IMR-90 (cell line): ENCODE measurements at regions of chr11 and their contacts with region 1.

Region 1: DNA sequence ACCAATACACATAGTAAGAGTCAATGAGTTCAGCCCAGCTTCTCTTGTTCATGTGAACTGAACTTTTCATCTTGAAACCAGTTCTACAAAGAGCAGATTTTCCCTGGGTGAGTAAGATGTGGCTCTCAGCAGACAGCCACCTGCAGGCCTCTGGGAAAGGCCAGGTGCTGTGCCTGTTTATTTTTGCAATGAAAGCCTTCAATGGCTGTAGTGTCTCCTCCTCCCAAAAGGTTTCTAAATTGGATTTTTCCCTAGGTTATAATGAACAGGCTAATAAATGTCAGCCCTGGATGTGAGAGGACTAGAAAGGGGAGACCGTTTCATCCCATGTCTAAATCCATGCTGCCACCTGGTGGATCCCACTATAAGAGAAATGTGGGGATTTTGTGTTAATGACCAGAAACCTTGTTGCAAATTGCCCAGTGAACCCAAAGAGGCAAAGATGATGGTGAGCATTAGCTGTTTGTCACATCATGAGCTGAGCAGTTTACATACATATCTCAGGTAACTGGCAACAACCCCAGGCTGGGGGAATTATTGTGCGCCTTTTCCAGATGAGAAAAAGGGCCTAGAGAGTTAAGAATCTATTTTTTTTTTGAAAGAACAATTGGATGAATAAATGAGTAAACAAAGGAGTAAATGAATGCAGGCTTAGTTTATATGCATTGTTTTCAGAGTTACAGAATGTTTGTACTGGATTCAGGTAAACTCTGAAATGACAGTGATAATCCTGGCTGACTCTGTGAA is 12.7 kb downstream of the C11orf91 start:
- DNase-seq: peak; percentile 78
- ATAC-seq: no peak
- H3K4me3 ChIP-seq: no peak overlapping the region
- H3K27ac ChIP-seq: no peak overlapping the region
- H3K4me1 ChIP-seq: peaks cover 28% of the 10 kb centered on the region
- H3K27me3 ChIP-seq: no peaks in the 10 kb centered on the region
- CTCF ChIP-seq: peak; percentile 96
- POLR2A ChIP-seq: peak; percentile 55; the same call in 1 of the 2 replicates
- RAD21 ChIP-seq: peak; percentile 98

Region 2: GRCh38 chr11:33161120-33162005 is 526.5 kb before region 1 on chr11 and contains the start of gene CSTF3:
- CTCF ChIA-PET with region 1: interaction called, 3 read pairs
- POLR2A ChIA-PET with region 1: no interaction called
- dilution Hi-C with region 1: no loop called
- in situ Hi-C with region 1: loop called (anchors 5 kb)
- intact Hi-C with region 1: loop called (anchors 1 kb)
- DNase-seq: peak; percentile 98
- ATAC-seq: peak; percentile 97
- H3K4me3 ChIP-seq: peak within 1 kb of the TSS; percentile 59
- H3K27ac ChIP-seq: peak within 1 kb of the TSS; percentile 69
- H3K4me1 ChIP-seq: peaks cover 4% of the 10 kb centered on the region
- H3K27me3 ChIP-seq: no peaks in the 10 kb centered on the region
- CTCF ChIP-seq: peak; percentile 42; the same call in 1 of the 2 replicates
- POLR2A ChIP-seq: peak; percentile 90
- RAD21 ChIP-seq: no peak; the same call in 1 of the 2 replicates
- total RNA-seq, gene CSTF3: 14.5 and 31.4 TPM in 2 replicates

Region 3: DNA sequence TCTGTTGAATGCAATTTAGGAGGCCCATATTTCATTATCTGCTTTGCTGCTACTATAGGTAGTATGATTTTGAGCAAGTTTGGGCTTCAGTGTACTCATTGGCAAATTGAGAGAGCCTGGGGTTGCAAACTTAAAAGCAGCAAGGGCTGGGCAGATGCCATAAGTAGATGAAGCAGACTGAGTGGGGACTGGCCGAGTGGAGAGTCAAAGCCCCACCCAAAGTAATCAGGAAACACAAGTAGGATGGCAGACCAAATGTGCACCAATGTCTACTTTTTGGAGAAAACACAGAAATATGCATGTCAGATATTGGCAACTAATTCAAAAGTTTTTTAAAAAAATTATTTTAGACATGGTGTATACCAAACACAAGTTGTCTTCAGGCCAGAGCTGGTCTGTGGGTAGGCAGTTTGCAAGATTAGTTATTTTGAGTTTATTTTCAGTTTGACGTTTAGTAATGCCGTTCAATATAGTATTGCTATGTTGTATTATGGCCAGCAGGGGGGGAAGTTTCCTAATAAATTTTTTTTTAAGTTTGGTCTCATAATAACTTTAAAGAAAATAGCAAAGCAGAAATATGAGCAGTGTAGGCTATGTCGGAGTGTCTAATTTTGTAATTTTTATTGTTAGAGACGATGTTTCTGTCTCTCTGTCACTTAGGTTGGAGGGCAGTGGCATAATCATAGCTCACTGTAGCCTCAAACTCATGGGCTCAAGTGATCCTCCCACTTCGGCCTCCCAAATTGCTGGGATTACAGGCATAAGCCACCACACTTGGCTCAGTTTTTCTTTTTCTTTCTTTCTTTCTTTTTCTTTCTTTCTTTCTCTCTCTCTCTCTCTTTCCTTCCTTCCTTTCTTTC is 325.6 kb before region 1 on chr11:
- CTCF ChIA-PET with region 1: interaction called, 5 read pairs
- POLR2A ChIA-PET with region 1: interaction called, 3 read pairs
- dilution Hi-C with region 1: no loop called
- in situ Hi-C with region 1: loop called (anchors 5 kb)
- intact Hi-C with region 1: loop called (anchors 1 kb)
- DNase-seq: peak; percentile 56
- ATAC-seq: peak; percentile 74
- H3K4me3 ChIP-seq: no peak overlapping the region
- H3K27ac ChIP-seq: no peak overlapping the region
- H3K4me1 ChIP-seq: no peaks in the 10 kb centered on the region; the same call in 1 of the 2 replicates
- H3K27me3 ChIP-seq: no peaks in the 10 kb centered on the region
- CTCF ChIP-seq: peak; percentile 76
- POLR2A ChIP-seq: no peak
- RAD21 ChIP-seq: peak; percentile 66

Region 4: DNA sequence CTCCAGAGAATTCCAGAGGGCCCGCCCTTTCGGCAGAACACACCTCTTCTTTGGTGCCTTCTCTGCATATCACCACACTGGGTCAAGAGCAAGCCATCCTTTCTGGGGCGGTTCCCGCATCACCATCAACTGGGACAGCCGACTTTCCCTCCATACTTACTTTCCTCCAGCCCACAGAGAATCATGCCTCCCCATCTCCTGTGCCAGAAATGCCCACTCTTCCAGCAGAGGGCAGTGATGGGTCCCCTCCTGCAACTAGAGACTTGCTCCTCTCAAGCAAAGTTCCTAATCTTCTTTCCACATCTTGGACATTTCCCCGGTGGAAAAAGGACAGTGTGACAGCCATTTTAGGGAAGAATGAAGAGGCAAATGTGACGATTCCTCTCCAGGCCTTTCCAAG is 145.0 kb before region 1 on chr11:
- CTCF ChIA-PET with region 1: no interaction called
- POLR2A ChIA-PET with region 1: no interaction called
- dilution Hi-C with region 1: no loop called
- in situ Hi-C with region 1: loop called (anchors 5 kb)
- intact Hi-C with region 1: loop called (anchors 1 kb)
- DNase-seq: peak; percentile 40
- ATAC-seq: peak; percentile 59; the same call in 1 of the 2 replicates
- H3K4me3 ChIP-seq: no peak overlapping the region
- H3K27ac ChIP-seq: no peak overlapping the region
- H3K4me1 ChIP-seq: peaks cover 2% of the 10 kb centered on the region; the same call in 1 of the 2 replicates
- H3K27me3 ChIP-seq: no peaks in the 10 kb centered on the region
- CTCF ChIP-seq: peak; percentile 61
- POLR2A ChIP-seq: no peak
- RAD21 ChIP-seq: peak; percentile 66

Region 5: GRCh38 chr11:33642461-33643166 is 45.3 kb before region 1 on chr11:
- CTCF ChIA-PET with region 1: no interaction called
- POLR2A ChIA-PET with region 1: no interaction called
- dilution Hi-C with region 1: no loop called
- in situ Hi-C with region 1: no loop called
- intact Hi-C with region 1: no loop called
- DNase-seq: no peak
- ATAC-seq: no peak
- H3K4me3 ChIP-seq: no peak overlapping the region
- H3K27ac ChIP-seq: no peak overlapping the region
- H3K4me1 ChIP-seq: peaks cover 4% of the 10 kb centered on the region
- H3K27me3 ChIP-seq: no peaks in the 10 kb centered on the region
- CTCF ChIP-seq: no peak
- POLR2A ChIP-seq: no peak
- RAD21 ChIP-seq: no peak

Region 6: DNA sequence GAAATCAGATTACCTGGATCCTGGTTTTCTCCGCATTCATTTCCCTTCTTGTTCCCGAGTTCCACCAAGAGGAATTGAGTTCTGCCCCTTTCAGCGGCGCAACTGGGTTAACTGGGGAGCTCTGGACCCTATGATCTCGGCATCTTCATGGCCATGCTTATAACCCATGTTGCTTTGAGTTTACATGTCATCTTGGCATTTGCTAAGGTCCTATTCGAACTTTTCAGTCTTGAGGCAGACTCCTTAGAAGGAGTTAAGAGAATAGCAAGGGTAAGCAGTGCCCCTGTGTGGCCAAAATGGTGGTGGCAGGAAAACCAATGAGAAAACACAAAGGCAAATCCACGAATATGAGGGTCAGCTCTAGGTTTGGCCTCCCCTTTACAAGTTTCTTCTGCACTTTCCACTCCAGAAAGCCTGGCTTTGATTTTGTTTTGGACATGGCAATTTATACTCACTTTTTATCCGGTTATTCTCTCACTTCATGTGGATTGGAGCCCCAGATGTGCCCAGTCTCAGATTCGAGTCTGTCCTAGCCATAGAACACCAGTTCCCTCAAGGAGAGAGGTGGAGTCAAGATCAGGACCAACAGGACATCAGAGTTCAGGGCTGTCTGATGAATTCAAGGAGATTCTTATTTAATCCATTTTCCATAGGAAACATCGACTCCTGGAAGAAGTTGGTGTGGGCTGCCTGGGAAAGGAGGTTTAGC is 141.7 kb after region 1 on chr11:
- CTCF ChIA-PET with region 1: interaction called, 4 read pairs
- POLR2A ChIA-PET with region 1: no interaction called
- dilution Hi-C with region 1: no loop called
- in situ Hi-C with region 1: no loop called
- intact Hi-C with region 1: loop called (anchors 2 kb)
- DNase-seq: peak; percentile 74
- ATAC-seq: peak; percentile 97
- H3K4me3 ChIP-seq: peak overlapping the region; percentile 36
- H3K27ac ChIP-seq: no peak overlapping the region
- H3K4me1 ChIP-seq: no peaks in the 10 kb centered on the region
- H3K27me3 ChIP-seq: peaks cover 44% of the 10 kb centered on the region
- CTCF ChIP-seq: peak; percentile 85
- POLR2A ChIP-seq: no peak
- RAD21 ChIP-seq: peak; percentile 90